Pancreas (tissue), 10 donors: ENCODE measurements at regions of chr6 and their contacts with region 1.

Region 1: GRCh38 chr6:42907336-42907735 is 8.5 kb upstream of the PTCRA start:
- DNase-seq: peak in 1 of 6 donors; percentile 44
- ATAC-seq: no peak
- H3K4me3 ChIP-seq: no peak overlapping the region
- H3K27ac ChIP-seq: no peak overlapping the region
- H3K4me1 ChIP-seq: peaks cover 0 to 9% (median 5%) of the 10 kb centered on the region in 3 donors
- H3K27me3 ChIP-seq: no peaks in the 10 kb centered on the region
- CTCF ChIP-seq: no peak

Region 2: GRCh38 chr6:42782622-42783176 is 124.6 kb before region 1 on chr6:
- intact Hi-C with region 1: no loop called
- DNase-seq: peak; percentile 78 to 88 (median 80)
- ATAC-seq: peak; percentile 57 to 72 (median 64)
- H3K4me3 ChIP-seq: peak overlapping the region; percentile 55 to 97 (median 66)
- H3K27ac ChIP-seq: peak overlapping the region; percentile 98 to 100 (median 100)
- H3K4me1 ChIP-seq: peaks cover 5 to 30% (median 6%) of the 10 kb centered on the region in 3 donors
- H3K27me3 ChIP-seq: no peaks in the 10 kb centered on the region
- CTCF ChIP-seq: no peak

Region 3: GRCh38 chr6:42845327-42845694 is 62.0 kb before region 1 on chr6:
- intact Hi-C with region 1: no loop called
- DNase-seq: no peak
- ATAC-seq: peak in 2 of 4 donors; percentile 46 to 52
- H3K4me3 ChIP-seq: no peak overlapping the region
- H3K27ac ChIP-seq: no peak overlapping the region
- H3K4me1 ChIP-seq: no peaks in the 10 kb centered on the region
- H3K27me3 ChIP-seq: no peaks in the 10 kb centered on the region
- CTCF ChIP-seq: no peak

Region 4: GRCh38 chr6:43143235-43144124 is 236.1 kb after region 1 on chr6:
- intact Hi-C with region 1: loop called (anchors 5 to 10 kb)
- DNase-seq: peak; percentile 77 to 94 (median 90)
- ATAC-seq: peak; percentile 99 to 100 (median 99)
- H3K4me3 ChIP-seq: no peak overlapping the region
- H3K27ac ChIP-seq: no peak overlapping the region
- H3K4me1 ChIP-seq: peaks cover 0 to 6% (median 0%) of the 10 kb centered on the region in 3 donors
- H3K27me3 ChIP-seq: no peaks in the 10 kb centered on the region
- CTCF ChIP-seq: peak; percentile 85 to 94 (median 93)